CD4-positive, alpha-beta memory T cell (primary cell): ENCODE measurements at regions of chr18 and their contacts with region 1.

Region 1: DNA sequence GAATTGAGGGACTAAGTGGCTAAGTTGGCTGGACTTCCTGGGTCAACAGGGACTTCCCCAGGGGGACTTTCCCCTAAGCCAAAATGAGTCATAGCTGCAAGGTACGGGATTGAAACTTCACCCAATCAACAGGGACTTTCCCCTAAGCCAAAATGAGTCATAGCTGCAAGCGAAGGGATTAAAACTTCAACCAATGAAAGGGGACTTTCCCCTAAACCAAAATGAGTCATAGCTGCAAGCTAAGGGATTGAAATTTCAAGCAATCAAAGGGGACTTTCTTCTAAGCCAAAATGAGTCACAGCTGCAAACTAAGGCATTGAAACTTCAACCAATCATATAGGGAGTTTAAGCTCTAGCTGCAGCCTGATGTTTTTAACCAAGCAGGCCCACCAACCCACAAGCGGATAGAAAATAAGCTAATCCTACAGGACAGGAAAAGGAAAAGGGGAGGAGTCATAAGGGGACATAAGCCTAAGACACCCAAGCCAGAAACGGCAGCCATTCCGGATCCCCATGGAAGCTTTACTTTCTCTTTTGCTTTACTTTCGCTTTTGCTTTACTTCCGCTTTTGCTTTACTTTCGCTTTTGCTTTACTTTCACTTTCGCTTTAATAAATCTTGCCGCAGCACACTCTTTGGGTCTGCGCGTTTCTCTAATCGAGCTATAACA is 1375.4 kb upstream of the CELF4 start:
- DNase-seq: peak; percentile 67 to 92 (median 79)
- H3K4me3 ChIP-seq: peak overlapping the region; percentile 31 to 50
- H3K4me3 Mint-ChIP-seq: peak overlapping the region; percentile 79 to 92 (median 90)
- H3K27ac ChIP-seq: peak overlapping the region; percentile 62
- H3K27ac Mint-ChIP-seq: peak overlapping the region; percentile 91 to 100 (median 98)
- H3K4me1 ChIP-seq: peaks cover 22% of the 10 kb centered on the region
- H3K4me1 Mint-ChIP-seq: peaks cover 18 to 25% (median 20%) of the 10 kb centered on the region in 4 donors
- H3K27me3 ChIP-seq: no peaks in the 10 kb centered on the region
- H3K27me3 Mint-ChIP-seq: peaks cover 0 to under 1% of the 10 kb centered on the region in 2 donors

Region 2: DNA sequence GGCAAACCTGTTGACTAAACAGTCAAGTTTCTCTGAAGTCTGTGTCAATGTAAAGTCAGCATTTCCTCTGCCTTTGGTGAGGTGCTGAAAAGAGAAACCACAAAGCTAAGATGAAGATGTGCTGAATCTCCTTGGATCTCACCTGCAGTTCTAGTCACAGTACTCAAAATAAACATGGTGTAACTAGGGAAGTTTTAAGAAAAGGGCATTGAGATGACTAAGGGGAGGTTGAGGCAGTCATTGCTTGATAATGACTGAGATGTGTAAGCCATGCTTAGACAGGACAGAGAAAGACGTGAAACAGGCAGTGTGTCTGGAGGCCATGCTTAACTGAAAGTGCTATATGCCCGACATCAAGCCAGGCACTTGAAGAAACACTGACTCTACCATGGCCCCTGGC is 365.3 kb before region 1 on chr18:
- CTCF ChIA-PET with region 1: no interaction called
- POLR2A ChIA-PET with region 1: no interaction called
- intact Hi-C with region 1: loop called (anchors 2 kb)
- DNase-seq: peak in 4 of 5 donors; percentile 20 to 48 (median 30)
- H3K4me3 ChIP-seq: no peak overlapping the region
- H3K4me3 Mint-ChIP-seq: peak overlapping the region in 7 of 8 donors; percentile 43 to 76 (median 74)
- H3K27ac ChIP-seq: no peak overlapping the region
- H3K27ac Mint-ChIP-seq: peak overlapping the region; percentile 9 to 96 (median 76)
- H3K4me1 ChIP-seq: peaks cover 22% of the 10 kb centered on the region
- H3K4me1 Mint-ChIP-seq: peaks cover 11 to 24% (median 16%) of the 10 kb centered on the region in 4 donors
- H3K27me3 ChIP-seq: no peaks in the 10 kb centered on the region
- H3K27me3 Mint-ChIP-seq: no peaks in the 10 kb centered on the region

Region 3: GRCh38 chr18:38951633-38952032 is 10.6 kb after region 1 on chr18:
- CTCF ChIA-PET with region 1: no interaction called
- POLR2A ChIA-PET with region 1: no interaction called
- intact Hi-C with region 1: no loop called
- DNase-seq: no peak
- H3K4me3 ChIP-seq: no peak overlapping the region
- H3K4me3 Mint-ChIP-seq: no peak overlapping the region
- H3K27ac ChIP-seq: no peak overlapping the region
- H3K27ac Mint-ChIP-seq: no peak overlapping the region
- H3K4me1 ChIP-seq: no peaks in the 10 kb centered on the region
- H3K4me1 Mint-ChIP-seq: peaks cover 0 to 9% (median 6%) of the 10 kb centered on the region in 4 donors
- H3K27me3 ChIP-seq: no peaks in the 10 kb centered on the region
- H3K27me3 Mint-ChIP-seq: peaks cover 1 to 3% of the 10 kb centered on the region in 2 donors